Calu3 (cell line): ENCODE measurements at regions of chr7 and their contacts with region 1.

Region 1: GRCh38 chr7:125670926-125671572 is 741.4 kb upstream of the POT1 start:
- DNase-seq: no peak
- H3K4me3 Mint-ChIP-seq: no peak overlapping the region
- H3K27ac Mint-ChIP-seq: no peak overlapping the region
- H3K4me1 Mint-ChIP-seq: no peaks in the 10 kb centered on the region
- H3K27me3 Mint-ChIP-seq: no peaks in the 10 kb centered on the region
- CTCF ChIP-seq: peak; percentile 61

Region 2: DNA sequence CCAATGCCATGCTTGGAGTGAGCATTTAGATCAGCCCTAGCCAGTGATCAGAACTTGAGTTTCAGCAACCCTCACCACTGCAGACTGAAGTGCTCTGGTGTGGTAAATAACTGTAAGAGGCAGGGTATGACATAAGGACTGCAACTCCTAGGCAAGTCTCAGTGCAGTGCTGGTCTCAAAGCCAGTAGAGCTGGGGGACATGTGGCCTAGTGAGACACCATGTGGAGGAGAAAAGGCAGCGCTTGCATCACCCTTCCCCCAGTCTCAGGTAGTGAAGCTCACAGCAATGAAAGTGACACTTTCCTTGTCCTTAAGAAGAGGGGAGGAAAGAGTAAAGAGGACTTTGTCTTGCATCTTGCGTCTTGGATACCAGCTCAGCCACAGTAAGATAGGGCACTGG is 354.6 kb before region 1 on chr7:
- CTCF ChIA-PET with region 1: no interaction called
- intact Hi-C with region 1: loop called (anchors 2 kb)
- DNase-seq: peak; percentile 65
- H3K4me3 Mint-ChIP-seq: no peak overlapping the region
- H3K27ac Mint-ChIP-seq: no peak overlapping the region
- H3K4me1 Mint-ChIP-seq: peaks cover 11% of the 10 kb centered on the region
- H3K27me3 Mint-ChIP-seq: no peaks in the 10 kb centered on the region
- CTCF ChIP-seq: peak; percentile 40